K562 (cell line): ENCODE measurements at regions of chr5 and their contacts with region 1.

Region 1: DNA sequence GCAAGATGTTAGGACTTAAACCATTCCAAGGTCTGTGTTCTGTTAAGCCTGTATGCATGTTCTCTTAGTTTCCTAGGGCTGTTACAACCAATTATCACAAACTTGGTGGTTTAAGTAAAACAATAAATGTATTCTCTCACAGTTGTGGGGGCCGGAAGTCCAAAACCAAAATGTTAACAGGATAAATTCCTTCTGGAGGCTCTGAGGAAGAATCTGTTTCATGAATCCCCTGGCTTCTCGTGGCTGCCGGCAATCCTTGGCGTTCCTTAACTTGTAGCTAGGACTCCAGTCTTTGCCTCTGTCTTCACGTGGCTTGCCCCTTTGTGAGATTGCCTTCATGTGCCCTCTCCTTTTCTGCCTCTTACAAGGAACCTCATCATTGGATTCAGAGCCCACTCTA is 30.4 kb downstream of the FEM1C start:
- DNase-seq: no peak
- ATAC-seq: no peak; the same call in 2 of the 3 replicates
- H3K4me3 ChIP-seq: no peak overlapping the region
- H3K27ac ChIP-seq: no peak overlapping the region
- H3K4me1 ChIP-seq: no peaks in the 10 kb centered on the region
- H3K27me3 ChIP-seq: peaks cover 2 to 16% of the 10 kb centered on the region in 2 experiments
- CTCF ChIP-seq: no peak
- EP300 ChIP-seq: no peak
- POLR2A ChIP-seq: no peak
- RAD21 ChIP-seq: no peak

Region 2: GRCh38 chr5:115565233-115565632 is 51.0 kb after region 1 on chr5:
- CTCF ChIA-PET with region 1: no interaction called
- POLR2A ChIA-PET with region 1: no interaction called
- in situ Hi-C with region 1: no loop called
- intact Hi-C with region 1: loop called (anchors 5 kb)
- DNase-seq: no peak
- ATAC-seq: no peak
- H3K4me3 ChIP-seq: no peak overlapping the region
- H3K27ac ChIP-seq: no peak overlapping the region
- H3K4me1 ChIP-seq: no peaks in the 10 kb centered on the region
- H3K27me3 ChIP-seq: peaks cover 0 to 5% of the 10 kb centered on the region in 2 experiments; a peak in 1 of 5 replicates
- CTCF ChIP-seq: no peak
- EP300 ChIP-seq: no peak
- POLR2A ChIP-seq: no peak
- RAD21 ChIP-seq: no peak

Region 3: GRCh38 chr5:116076496-116076895 is 562.3 kb after region 1 on chr5:
- CTCF ChIA-PET with region 1: no interaction called
- POLR2A ChIA-PET with region 1: no interaction called
- in situ Hi-C with region 1: no loop called
- intact Hi-C with region 1: no loop called
- DNase-seq: no peak
- ATAC-seq: peak; percentile 30; the same call in 2 of the 3 replicates
- H3K4me3 ChIP-seq: no peak overlapping the region
- H3K27ac ChIP-seq: no peak overlapping the region
- H3K4me1 ChIP-seq: no peaks in the 10 kb centered on the region; a peak in 1 of 5 replicates
- H3K27me3 ChIP-seq: no peaks in the 10 kb centered on the region
- CTCF ChIP-seq: no peak
- EP300 ChIP-seq: no peak
- POLR2A ChIP-seq: no peak
- RAD21 ChIP-seq: no peak